G401 (cell line): ENCODE measurements at regions of chr12 and their contacts with region 1.

Region 1: GRCh38 chr12:9707864-9708808 is 24.8 kb downstream of the CLECL1 start:
- DNase-seq: peak; percentile 20

Region 2: DNA sequence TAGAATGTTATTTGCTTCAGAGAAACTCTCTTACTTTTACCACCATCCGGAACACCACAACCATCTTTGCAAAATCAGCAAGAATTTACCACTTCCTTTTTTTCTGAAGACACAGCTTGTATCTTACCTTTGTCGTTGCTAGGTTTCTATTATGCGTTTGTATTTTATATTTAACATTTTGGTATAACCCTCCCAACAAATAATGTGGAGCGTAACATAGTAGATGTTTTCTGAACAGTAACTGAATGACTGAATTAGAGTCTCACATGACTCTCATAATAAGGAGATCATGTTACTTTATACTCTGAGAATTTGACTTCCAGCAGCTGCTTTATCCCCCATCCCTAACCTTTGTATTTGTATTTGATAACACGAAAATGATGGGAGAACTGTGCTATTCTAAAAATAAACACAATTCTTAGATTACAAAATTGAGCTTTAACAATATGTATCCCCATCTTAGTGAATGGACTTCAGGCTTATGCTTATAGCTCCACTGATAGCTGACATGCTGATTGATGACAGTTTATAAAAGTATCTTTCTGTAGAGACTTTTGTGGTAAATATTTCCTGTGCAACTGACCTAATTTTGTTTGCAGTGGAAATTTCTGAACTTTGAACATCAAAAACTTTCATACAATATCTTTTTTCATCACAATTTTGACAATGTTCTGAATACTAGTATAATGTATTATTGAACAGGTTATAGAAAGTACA is 92.6 kb before region 1 on chr12:
- in situ Hi-C with region 1: no loop called
- DNase-seq: no peak

Region 3: GRCh38 chr12:9634177-9634803 is 73.8 kb before region 1 on chr12:
- in situ Hi-C with region 1: loop called (anchors 10 kb)
- DNase-seq: peak; percentile 19

Region 4: DNA sequence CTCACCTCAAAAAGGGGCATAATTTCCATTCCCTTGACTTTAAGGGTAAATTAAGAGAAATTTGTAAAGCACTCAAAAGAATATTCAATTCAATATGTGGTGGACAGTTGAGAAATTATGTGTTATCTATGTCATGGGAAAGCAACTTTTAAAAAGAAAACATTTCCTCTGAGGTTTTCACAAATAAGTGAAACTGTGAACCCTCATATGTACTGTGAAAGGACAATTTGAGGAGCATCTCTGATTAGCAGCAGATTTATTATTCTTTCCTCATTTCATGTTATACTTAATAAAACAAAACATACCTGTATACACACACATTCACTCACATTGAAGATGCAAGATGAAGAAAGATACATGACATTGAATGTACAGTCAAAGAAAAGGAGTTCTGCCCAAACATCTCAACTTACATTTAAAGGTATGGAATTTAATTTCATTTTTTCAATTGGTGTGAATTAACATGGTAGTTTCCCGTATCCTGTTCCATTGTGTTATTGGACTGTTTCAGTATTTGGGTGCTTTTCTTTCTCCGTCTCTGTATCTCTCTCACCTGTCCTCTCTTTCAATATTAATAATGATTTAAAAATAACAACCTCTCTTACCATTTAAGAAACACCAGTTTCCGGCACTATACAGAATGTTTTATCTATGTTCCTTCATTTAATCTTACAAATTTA is 119.2 kb after region 1 on chr12 and contains the start of gene KLRF1:
- in situ Hi-C with region 1: no loop called
- DNase-seq: no peak
- total RNA-seq, gene KLRF1: not detected in 2 replicates